Activated CD4-positive, alpha-beta T cell treated with anti-CD3 and anti-CD28 coated beads, Interleukin-2, amount 10 ng/mL, durations not matched to agents 24 days and 14 days (primary cell): ENCODE measurements at regions of chr1 and their contacts with region 1.

Region 1: GRCh38 chr1:157992031-157992832 is 1.2 kb upstream of the KIRREL1 start:
- DNase-seq: peak; percentile 77
- H3K4me3 Mint-ChIP-seq: no peak overlapping the region
- H3K27ac Mint-ChIP-seq: no peak overlapping the region
- H3K4me1 Mint-ChIP-seq: peaks cover 3% of the 10 kb centered on the region
- H3K27me3 Mint-ChIP-seq: peaks cover 43% of the 10 kb centered on the region

Region 2: DNA sequence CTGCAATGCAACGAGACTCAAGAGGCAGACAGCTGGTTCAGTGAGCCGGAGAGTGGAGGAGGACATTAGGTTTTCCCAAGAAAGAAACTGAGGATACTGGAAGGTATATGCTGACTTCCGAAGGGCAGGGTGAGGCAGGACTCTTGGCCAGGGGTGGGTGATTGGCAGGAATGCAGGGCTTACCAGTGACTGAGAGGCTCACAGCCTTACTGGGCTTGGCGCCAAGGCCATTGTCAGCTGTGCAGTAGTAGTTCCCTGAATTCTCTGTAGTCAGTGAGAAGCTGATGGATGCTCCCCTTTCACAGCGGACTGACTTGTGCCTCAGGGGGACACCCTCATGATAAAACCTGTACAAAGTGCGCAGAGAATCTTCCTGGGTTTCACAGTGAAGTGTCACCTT is 449.6 kb before region 1 on chr1:
- intact Hi-C with region 1: no loop called
- DNase-seq: no peak
- H3K4me3 Mint-ChIP-seq: no peak overlapping the region
- H3K27ac Mint-ChIP-seq: no peak overlapping the region
- H3K4me1 Mint-ChIP-seq: no peaks in the 10 kb centered on the region
- H3K27me3 Mint-ChIP-seq: peaks cover 7% of the 10 kb centered on the region

Region 3: DNA sequence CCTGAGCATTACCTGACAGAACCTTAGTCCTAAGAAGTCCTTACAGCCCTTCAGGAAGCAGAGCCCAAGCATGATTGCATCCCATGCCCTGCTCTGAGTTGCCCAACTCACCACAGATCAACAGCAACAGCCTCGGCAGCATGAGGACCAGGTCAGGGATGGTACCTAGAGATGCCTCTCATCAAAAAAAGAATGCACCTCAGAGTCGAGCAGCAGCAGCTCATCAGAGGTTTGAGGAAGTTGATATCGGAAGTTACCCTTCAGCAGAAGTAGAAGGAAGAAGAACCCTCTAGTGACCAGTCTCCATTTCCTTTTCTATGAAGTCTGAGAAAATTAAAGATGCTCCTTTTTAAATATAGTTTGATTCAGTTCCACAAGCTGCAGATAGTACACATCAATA is 172.3 kb before region 1 on chr1 and contains the start of gene FCRL1:
- intact Hi-C with region 1: no loop called
- DNase-seq: no peak
- H3K4me3 Mint-ChIP-seq: no peak within 1 kb of the TSS
- H3K27ac Mint-ChIP-seq: no peak within 1 kb of the TSS
- H3K4me1 Mint-ChIP-seq: no peaks in the 10 kb centered on the region
- H3K27me3 Mint-ChIP-seq: peaks cover 2% of the 10 kb centered on the region
- total RNA-seq, gene FCRL1: not detected in 2 replicates

Region 4: GRCh38 chr1:157963713-157964112 is 28.5 kb before region 1 on chr1:
- intact Hi-C with region 1: loop called (anchors 1 kb)
- DNase-seq: peak; percentile 83
- H3K4me3 Mint-ChIP-seq: no peak overlapping the region
- H3K27ac Mint-ChIP-seq: no peak overlapping the region
- H3K4me1 Mint-ChIP-seq: no peaks in the 10 kb centered on the region
- H3K27me3 Mint-ChIP-seq: peaks cover 3% of the 10 kb centered on the region

Region 5: GRCh38 chr1:158035976-158036583 is 43.8 kb after region 1 on chr1:
- intact Hi-C with region 1: loop called (anchors 1 kb)
- DNase-seq: peak; percentile 56
- H3K4me3 Mint-ChIP-seq: no peak overlapping the region
- H3K27ac Mint-ChIP-seq: no peak overlapping the region
- H3K4me1 Mint-ChIP-seq: no peaks in the 10 kb centered on the region
- H3K27me3 Mint-ChIP-seq: no peaks in the 10 kb centered on the region

Region 6: DNA sequence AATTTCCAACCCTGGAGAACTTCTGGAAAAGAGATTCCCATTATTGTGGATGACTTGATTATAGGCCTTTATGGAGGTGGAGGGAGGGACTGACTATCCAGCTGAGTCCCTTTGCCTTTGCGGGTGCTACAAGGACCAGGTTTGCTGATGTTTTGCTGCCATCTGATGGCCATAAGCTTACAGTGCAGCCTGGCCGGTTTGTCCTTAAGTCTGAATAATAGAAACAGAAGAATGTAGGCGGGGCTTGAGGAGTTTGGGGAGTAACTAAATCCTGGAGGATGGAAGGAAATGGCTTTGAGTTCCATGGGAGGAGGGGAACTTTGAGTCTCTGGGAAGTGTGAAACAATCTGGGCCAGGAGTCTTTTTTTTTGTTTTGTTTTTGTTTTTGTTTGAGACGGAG is 132.8 kb after region 1 on chr1:
- intact Hi-C with region 1: loop called (anchors 1 kb)
- DNase-seq: peak; percentile 91
- H3K4me3 Mint-ChIP-seq: no peak overlapping the region
- H3K27ac Mint-ChIP-seq: no peak overlapping the region
- H3K4me1 Mint-ChIP-seq: peaks cover 4% of the 10 kb centered on the region
- H3K27me3 Mint-ChIP-seq: peaks cover 29% of the 10 kb centered on the region